Activated T-helper 2 cell treated with anti-CD3 and anti-CD28 coated beads, Interferon-gamma antibody, Interleukin-2, Interleukin-4, amounts not matched to agents 10 μg/mL and 5 μg/mL and 100 μg/mL, durations not matched to agents 14 hours and 24 hours and 36 hours (primary cell): ENCODE measurements at regions of chr1 and their contacts with region 1.

Region 1: GRCh38 chr1:210584439-210585113 is 255.9 kb downstream of the HHAT start:
- DNase-seq: peak; percentile 48
- H3K4me3 Mint-ChIP-seq: no peak overlapping the region
- H3K27ac Mint-ChIP-seq: no peak overlapping the region
- H3K4me1 Mint-ChIP-seq: no peaks in the 10 kb centered on the region
- H3K27me3 Mint-ChIP-seq: peaks cover 10% of the 10 kb centered on the region

Region 2: GRCh38 chr1:210407207-210407886 is 177.2 kb before region 1 on chr1:
- intact Hi-C with region 1: loop called (anchors 5 kb)
- DNase-seq: peak; percentile 49
- H3K4me3 Mint-ChIP-seq: no peak overlapping the region
- H3K27ac Mint-ChIP-seq: no peak overlapping the region
- H3K4me1 Mint-ChIP-seq: no peaks in the 10 kb centered on the region
- H3K27me3 Mint-ChIP-seq: peaks cover 23% of the 10 kb centered on the region

Region 3: GRCh38 chr1:210633636-210634035 is 49.1 kb after region 1 on chr1:
- intact Hi-C with region 1: no loop called
- DNase-seq: no peak
- H3K4me3 Mint-ChIP-seq: no peak overlapping the region
- H3K27ac Mint-ChIP-seq: no peak overlapping the region
- H3K4me1 Mint-ChIP-seq: no peaks in the 10 kb centered on the region
- H3K27me3 Mint-ChIP-seq: no peaks in the 10 kb centered on the region

Region 4: DNA sequence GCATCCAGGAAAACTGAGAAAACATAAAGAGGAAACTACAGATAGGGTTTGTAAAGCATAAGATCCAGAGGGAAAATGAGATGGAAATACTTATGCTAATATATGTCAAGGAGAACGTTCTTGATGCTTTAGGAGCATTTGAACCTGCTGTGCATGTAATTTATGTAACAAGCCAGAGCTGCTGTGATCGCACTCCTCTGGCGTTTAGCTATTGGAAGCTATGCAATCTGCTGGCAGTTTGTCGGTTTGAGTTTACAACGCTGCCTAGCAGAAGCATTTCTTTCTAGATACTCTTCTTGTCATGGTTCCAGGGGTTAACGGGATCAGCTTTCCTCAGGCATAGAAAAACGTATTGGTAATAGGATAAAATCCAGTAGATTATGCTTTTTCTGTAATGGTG is 366.7 kb after region 1 on chr1:
- intact Hi-C with region 1: loop called (anchors 5 kb)
- DNase-seq: no peak
- H3K4me3 Mint-ChIP-seq: no peak overlapping the region
- H3K27ac Mint-ChIP-seq: no peak overlapping the region
- H3K4me1 Mint-ChIP-seq: no peaks in the 10 kb centered on the region
- H3K27me3 Mint-ChIP-seq: no peaks in the 10 kb centered on the region

Region 5: GRCh38 chr1:211133836-211134669 is 549.5 kb after region 1 on chr1 and contains the start of gene KCNH1:
- intact Hi-C with region 1: loop called (anchors 1 kb)
- DNase-seq: peak; percentile 65
- H3K4me3 Mint-ChIP-seq: peak within 1 kb of the TSS; percentile 35
- H3K27ac Mint-ChIP-seq: no peak within 1 kb of the TSS
- H3K4me1 Mint-ChIP-seq: peaks cover 5% of the 10 kb centered on the region
- H3K27me3 Mint-ChIP-seq: peaks cover 79% of the 10 kb centered on the region
- total RNA-seq, gene KCNH1: not detected in 2 replicates

Region 6: GRCh38 chr1:211654838-211655787 is 1070.5 kb after region 1 on chr1:
- intact Hi-C with region 1: loop called (anchors 10 kb)
- DNase-seq: peak; percentile 72
- H3K4me3 Mint-ChIP-seq: no peak overlapping the region
- H3K27ac Mint-ChIP-seq: no peak overlapping the region
- H3K4me1 Mint-ChIP-seq: peaks cover 5% of the 10 kb centered on the region
- H3K27me3 Mint-ChIP-seq: peaks cover 3% of the 10 kb centered on the region